Posterior vena cava (tissue), 2 donors: ENCODE measurements at regions of chr7 and their contacts with region 1.

Region 1: GRCh38 chr7:49244543-49244942 is 320.2 kb downstream of the CDC14C start:
- DNase-seq: no peak

Region 2: GRCh38 chr7:49264530-49264929 is 20.0 kb after region 1 on chr7:
- intact Hi-C with region 1: loop called in 1 of 2 experiments (anchors 1 kb)
- DNase-seq: no peak